ENCODE measurements at regions of chr7 and their contacts with region 1.

Region 1: GRCh38 chr7:17234398-17235031 is 63.9 kb upstream of the AHR start:
- DNase-seq: peak; percentile 91
- H3K4me3 Mint-ChIP-seq: peak overlapping the region; percentile 81
- H3K27ac Mint-ChIP-seq: peak overlapping the region; percentile 97
- H3K4me1 Mint-ChIP-seq: peaks cover 35% of the 10 kb centered on the region
- H3K27me3 Mint-ChIP-seq: no peaks in the 10 kb centered on the region

Region 2: GRCh38 chr7:16420649-16421332 is 813.7 kb before region 1 on chr7:
- intact Hi-C with region 1: loop called (anchors 5 kb)
- DNase-seq: peak; percentile 95
- H3K4me3 Mint-ChIP-seq: peak overlapping the region; percentile 89
- H3K27ac Mint-ChIP-seq: peak overlapping the region; percentile 98
- H3K4me1 Mint-ChIP-seq: peaks cover 18% of the 10 kb centered on the region
- H3K27me3 Mint-ChIP-seq: peaks cover 3% of the 10 kb centered on the region

Region 3: DNA sequence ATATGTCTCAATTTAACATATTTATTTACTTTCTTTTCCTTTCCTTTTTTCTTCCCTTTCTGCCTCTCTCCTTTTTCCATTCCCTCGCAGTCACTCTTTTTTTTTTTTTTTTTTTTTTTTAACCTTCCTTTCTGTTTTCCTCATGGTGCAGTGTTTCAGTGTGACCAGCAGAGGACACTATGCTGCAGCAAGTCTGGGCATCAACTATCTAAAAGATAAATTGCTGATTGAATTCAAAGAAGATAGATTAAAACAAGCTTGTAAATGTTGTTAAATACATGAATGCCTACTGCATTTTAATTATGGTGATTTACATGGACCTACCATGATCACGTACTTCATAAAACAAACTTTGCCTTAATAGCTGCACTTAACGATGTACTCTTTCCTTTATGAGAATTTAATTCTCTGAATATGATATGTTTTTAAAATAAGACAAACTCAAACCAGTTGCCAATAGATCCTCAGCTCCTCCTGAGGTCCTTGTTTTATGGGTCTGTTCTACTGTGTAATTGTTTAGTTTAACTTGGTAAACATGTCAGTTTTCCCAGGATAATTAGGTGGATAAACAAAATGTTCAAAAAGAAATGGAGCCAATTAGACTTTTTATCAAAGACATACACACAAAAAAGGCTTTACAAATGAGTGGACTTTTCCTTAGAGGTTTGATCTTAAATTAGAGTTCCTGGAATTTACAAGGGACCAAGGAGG is 251.7 kb before region 1 on chr7:
- intact Hi-C with region 1: loop called (anchors 2 kb)
- DNase-seq: peak; percentile 75
- H3K4me3 Mint-ChIP-seq: peak overlapping the region; percentile 20
- H3K27ac Mint-ChIP-seq: no peak overlapping the region
- H3K4me1 Mint-ChIP-seq: peaks cover 15% of the 10 kb centered on the region
- H3K27me3 Mint-ChIP-seq: peaks cover 36% of the 10 kb centered on the region

Region 4: GRCh38 chr7:17134786-17135185 is 99.7 kb before region 1 on chr7:
- intact Hi-C with region 1: loop called (anchors 1 kb)
- DNase-seq: peak; percentile 71
- H3K4me3 Mint-ChIP-seq: peak overlapping the region; percentile 29
- H3K27ac Mint-ChIP-seq: peak overlapping the region; percentile 35
- H3K4me1 Mint-ChIP-seq: peaks cover 56% of the 10 kb centered on the region
- H3K27me3 Mint-ChIP-seq: no peaks in the 10 kb centered on the region

Region 5: DNA sequence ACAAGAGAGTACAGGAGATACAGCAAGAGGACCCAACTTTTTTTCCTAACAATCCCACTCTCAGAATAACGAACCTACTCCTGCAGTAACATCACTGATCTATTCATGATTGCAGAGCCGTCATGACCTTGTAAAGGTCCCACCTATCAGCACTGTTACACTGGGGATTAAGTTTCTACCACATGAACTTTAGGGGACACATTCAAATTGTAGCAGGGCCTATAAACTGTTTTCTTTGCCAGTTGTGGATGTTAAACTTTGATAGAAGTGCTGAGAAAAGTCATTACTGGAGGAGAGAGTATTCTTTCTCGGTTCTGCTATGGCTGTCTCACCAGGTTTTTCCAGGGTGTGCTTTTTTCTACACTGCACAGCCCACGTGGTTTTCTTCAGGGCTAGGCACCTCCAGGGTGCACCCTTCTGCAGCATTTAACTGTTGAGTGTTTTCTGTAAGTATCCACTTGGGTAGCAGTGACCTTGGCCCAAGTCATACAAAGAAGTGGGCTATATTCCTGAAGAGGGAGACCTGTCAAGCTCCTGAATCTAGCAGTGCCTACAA is 67.6 kb before region 1 on chr7:
- intact Hi-C with region 1: loop called (anchors 1 kb)
- DNase-seq: no peak
- H3K4me3 Mint-ChIP-seq: no peak overlapping the region
- H3K27ac Mint-ChIP-seq: peak overlapping the region; percentile 8
- H3K4me1 Mint-ChIP-seq: peaks cover 30% of the 10 kb centered on the region
- H3K27me3 Mint-ChIP-seq: no peaks in the 10 kb centered on the region

Region 6: GRCh38 chr7:17298207-17298839 is 63.8 kb after region 1 on chr7 and contains the start of gene AHR:
- intact Hi-C with region 1: loop called (anchors 1 kb)
- DNase-seq: peak; percentile 90
- H3K4me3 Mint-ChIP-seq: peak within 1 kb of the TSS; percentile 96
- H3K27ac Mint-ChIP-seq: peak within 1 kb of the TSS; percentile 97
- H3K4me1 Mint-ChIP-seq: peaks cover 23% of the 10 kb centered on the region
- H3K27me3 Mint-ChIP-seq: peaks cover 2% of the 10 kb centered on the region
- total RNA-seq, gene AHR: 28.2 and 30.7 TPM in 2 replicates

Region 7: GRCh38 chr7:18859318-18859717 is 1624.8 kb after region 1 on chr7:
- intact Hi-C with region 1: loop called (anchors 5 kb)
- DNase-seq: peak; percentile 69
- H3K4me3 Mint-ChIP-seq: peak overlapping the region; percentile 9
- H3K27ac Mint-ChIP-seq: peak overlapping the region; percentile 86
- H3K4me1 Mint-ChIP-seq: peaks cover 20% of the 10 kb centered on the region
- H3K27me3 Mint-ChIP-seq: no peaks in the 10 kb centered on the region

Measured in activated CD4-positive, alpha-beta T cell treated with anti-CD3 and anti-CD28 coated beads, Interleukin-2, amount 10 ng/mL, durations not matched to agents 24 days and 14 days (primary cell).